AG04449 (cell line): ENCODE measurements at regions of chr3 and their contacts with region 1.

Region 1: DNA sequence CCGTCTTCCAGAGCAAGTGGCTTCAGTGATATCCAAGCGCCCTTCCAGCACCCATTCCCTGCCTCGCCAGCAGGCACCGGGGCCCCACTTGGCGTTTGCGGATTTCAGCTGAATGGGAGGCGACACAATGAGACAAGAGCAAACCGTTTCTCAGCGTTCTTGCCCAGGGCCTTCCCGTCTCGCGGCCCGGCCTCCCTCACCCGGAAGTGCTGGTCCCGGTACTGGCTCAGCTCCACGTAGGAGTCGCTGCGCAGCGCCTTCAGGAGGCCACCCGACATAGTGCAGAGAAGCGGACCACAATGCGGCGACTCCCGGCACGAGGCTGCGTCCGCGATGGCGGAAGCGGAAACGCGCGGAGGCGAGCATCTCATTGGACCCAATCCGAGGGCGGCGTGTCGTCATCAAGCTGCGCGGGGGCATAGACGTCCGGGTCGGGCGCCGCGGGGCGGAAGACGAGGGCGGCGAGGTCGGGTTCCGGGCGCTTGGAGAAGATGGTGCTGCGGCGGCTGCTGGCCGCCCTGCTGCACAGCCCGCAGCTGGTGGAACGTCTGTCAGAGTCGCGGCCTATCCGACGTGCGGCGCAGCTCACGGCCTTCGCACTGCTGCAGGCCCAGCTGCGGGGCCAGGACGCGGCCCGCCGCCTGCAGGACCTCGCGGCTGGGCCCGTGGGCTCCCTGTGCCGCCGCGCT is at the start of gene NCBP2:
- DNase-seq: peak; percentile 87
- H3K4me3 ChIP-seq: peak within 1 kb of the TSS; percentile 99
- CTCF ChIP-seq: peak; percentile 88

Region 2: DNA sequence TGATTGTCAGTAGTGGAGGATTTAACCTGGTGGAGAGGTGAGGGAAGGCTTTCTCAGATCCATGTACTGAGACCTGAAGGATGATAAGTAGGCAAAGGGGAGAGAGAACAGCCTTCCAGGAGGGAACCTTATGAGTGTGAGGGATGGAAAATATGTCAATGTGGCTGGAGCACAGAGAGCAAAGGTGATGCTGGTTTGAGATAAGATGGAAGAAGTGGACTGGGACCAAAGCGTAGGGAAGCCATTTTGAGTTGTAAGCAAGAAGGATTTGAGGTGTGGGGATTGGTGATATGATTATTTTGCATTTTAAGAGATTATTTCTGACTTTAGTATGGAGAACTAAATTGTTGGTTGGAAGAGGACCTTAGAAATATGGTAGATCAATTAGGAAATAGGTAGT is 370.0 kb before region 1 on chr3:
- CTCF ChIA-PET with region 1: no interaction called
- POLR2A ChIA-PET with region 1: no interaction called
- DNase-seq: no peak
- H3K4me3 ChIP-seq: no peak overlapping the region
- CTCF ChIP-seq: no peak

Region 3: GRCh38 chr3:196867507-196868296 is 74.7 kb before region 1 on chr3 and contains the start of gene SENP5:
- CTCF ChIA-PET with region 1: interaction called, 3 read pairs
- POLR2A ChIA-PET with region 1: interaction called, 10 read pairs
- DNase-seq: peak; percentile 17
- H3K4me3 ChIP-seq: peak within 1 kb of the TSS; percentile 88
- CTCF ChIP-seq: no peak

Region 4: DNA sequence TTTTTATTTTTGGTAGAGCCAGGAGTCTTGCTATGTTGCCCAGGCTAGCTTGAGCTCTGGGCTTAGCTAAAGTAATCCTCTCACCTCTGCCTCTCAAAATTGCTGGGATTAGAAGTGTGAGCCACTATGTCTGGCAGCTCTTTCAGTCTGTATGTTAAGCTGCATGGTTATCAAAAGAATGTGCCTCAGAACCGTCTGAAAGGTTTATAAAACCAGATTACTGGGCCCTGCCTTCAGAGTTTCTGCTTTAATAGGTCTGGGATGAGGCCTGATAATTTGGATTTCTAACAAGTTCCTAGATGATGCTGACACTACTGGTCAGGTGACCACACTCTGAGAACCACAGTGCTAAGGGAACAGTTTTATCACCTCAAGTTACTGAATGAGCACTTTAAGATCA is 40.1 kb before region 1 on chr3:
- CTCF ChIA-PET with region 1: no interaction called
- POLR2A ChIA-PET with region 1: no interaction called
- DNase-seq: no peak
- H3K4me3 ChIP-seq: no peak overlapping the region
- CTCF ChIP-seq: no peak

Region 5: DNA sequence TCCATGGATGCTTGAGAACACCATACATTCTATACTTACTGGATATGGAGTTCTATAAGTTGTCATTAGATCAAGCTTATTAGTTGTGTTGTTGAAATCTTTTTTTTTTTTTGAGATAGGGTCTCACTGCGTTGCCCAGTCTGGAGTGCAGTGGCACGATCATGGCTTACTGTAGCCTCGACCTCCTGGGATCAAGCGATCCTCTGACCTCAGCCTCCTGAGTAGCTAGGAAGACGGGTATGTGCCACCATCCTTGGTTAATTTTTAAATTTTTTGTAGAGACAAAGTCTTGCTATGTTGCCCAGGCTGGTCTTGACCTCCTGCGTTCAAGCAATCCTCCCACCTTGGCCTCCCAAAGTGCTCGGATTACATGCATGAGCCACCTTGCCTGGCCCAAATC is 12.5 kb after region 1 on chr3:
- CTCF ChIA-PET with region 1: interaction called, 14 read pairs
- POLR2A ChIA-PET with region 1: interaction called, 3 read pairs
- DNase-seq: no peak
- H3K4me3 ChIP-seq: no peak overlapping the region
- CTCF ChIP-seq: no peak

Region 6: GRCh38 chr3:196969660-196970546 is 27.5 kb after region 1 on chr3:
- CTCF ChIA-PET with region 1: interaction called, 24 read pairs
- POLR2A ChIA-PET with region 1: interaction called, 4 read pairs
- DNase-seq: no peak
- H3K4me3 ChIP-seq: peak overlapping the region; percentile 60
- CTCF ChIP-seq: peak; percentile 73

Region 7: GRCh38 chr3:197002701-197003454 is 60.5 kb after region 1 on chr3:
- CTCF ChIA-PET with region 1: no interaction called
- POLR2A ChIA-PET with region 1: no interaction called
- DNase-seq: no peak
- H3K4me3 ChIP-seq: peak overlapping the region; percentile 62
- CTCF ChIP-seq: peak; percentile 82

Region 8: DNA sequence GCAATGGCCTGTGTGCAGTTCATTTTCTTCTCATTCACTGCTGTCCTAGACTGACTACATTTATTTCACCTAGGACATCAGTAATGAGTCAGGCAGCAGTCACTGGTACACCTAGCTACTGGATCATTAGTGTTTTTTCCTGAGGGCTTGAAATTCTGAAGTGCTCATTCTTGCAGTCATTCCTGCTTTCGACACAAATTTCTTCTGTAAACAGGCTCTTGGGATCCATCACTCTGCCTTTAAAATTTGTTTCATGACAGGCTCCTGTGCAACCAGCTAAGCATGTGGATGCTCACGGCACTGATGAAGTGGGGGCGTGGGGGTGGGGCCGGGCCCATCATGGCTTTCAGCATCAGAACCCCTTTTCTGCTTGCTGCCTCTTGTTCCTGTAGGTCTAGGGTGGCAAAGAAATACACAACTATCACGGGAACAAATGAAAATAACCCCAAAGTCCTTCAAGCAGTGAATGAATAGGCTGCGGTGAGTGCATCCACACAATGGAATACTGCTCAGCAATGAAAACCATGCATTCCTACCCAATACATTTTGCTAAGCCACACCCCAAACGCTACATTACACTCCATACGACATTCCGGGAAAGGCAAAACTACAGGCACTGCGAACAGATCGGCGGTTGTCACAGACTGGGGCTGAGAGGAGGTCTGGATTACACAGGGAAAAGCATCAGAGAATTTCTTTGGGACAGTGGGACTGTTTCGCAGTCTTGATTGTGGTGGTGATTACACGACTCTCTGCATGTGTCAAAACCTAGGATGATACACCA is 96.5 kb after region 1 on chr3:
- CTCF ChIA-PET with region 1: no interaction called
- POLR2A ChIA-PET with region 1: no interaction called
- DNase-seq: no peak
- H3K4me3 ChIP-seq: no peak overlapping the region
- CTCF ChIP-seq: no peak